HCT116 (cell line): ENCODE measurements at regions of chr1 and their contacts with region 1.

Region 1: GRCh38 chr1:40519517-40519916 is 10.9 kb downstream of the EXO5 start:
- DNase-seq: no peak
- ATAC-seq: no peak
- H3K4me3 ChIP-seq: no peak overlapping the region
- H3K27ac ChIP-seq: no peak overlapping the region
- H3K4me1 ChIP-seq: no peaks in the 10 kb centered on the region
- H3K27me3 ChIP-seq: no peaks in the 10 kb centered on the region
- CTCF ChIP-seq: no peak
- POLR2A ChIP-seq: no peak
- RAD21 ChIP-seq: no peak

Region 2: DNA sequence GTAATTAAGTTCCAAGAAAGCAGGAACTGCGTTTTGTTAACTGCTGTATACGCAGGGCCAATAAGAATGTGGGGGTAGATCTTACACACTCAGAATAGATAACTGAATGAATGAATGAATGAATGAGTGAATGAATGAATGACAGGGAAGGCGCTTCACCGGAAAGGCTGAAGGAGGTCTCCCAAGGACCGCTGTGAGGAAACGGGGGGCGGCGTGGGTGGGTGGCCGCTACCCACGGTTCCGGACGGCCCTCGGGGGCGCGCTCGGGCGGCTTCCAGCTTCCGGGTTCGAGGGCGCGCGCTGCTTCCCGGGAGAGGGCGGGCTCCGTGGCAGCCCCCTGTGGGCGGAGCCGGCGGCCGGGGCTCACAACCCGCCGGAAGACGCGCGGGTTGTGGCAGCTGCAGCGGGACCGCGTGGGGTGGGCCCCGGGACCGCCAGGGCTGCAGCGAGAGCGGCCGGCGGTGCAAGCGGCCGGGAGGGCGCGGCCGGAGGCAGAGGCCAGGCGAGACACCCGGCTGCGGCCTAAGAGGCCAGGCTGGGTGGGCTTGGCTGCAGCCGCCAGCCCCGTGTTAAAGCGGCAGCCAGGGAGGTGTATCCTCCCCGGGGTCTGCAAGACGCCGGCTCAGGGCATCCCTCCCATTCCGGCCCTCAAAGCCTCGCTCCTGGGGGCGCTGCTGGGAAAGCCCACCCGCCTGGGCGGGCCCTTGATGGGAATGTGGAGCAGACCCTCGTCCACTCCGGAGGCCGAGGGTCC is 42.4 kb before region 1 on chr1 and contains the start of gene ZFP69:
- CTCF ChIA-PET with region 1: no interaction called
- POLR2A ChIA-PET with region 1: no interaction called
- RAD21 ChIA-PET with region 1: no interaction called
- intact Hi-C with region 1: loop called (anchors 2 kb)
- DNase-seq: no peak
- ATAC-seq: no peak
- H3K4me3 ChIP-seq: no peak within 1 kb of the TSS
- H3K27ac ChIP-seq: no peak within 1 kb of the TSS
- H3K4me1 ChIP-seq: no peaks in the 10 kb centered on the region
- H3K27me3 ChIP-seq: no peaks in the 10 kb centered on the region
- CTCF ChIP-seq: no peak
- POLR2A ChIP-seq: no peak
- RAD21 ChIP-seq: no peak
- total RNA-seq, gene ZFP69: not detected